ENCODE measurements at regions of chr7 and their contacts with region 1.

Region 1: DNA sequence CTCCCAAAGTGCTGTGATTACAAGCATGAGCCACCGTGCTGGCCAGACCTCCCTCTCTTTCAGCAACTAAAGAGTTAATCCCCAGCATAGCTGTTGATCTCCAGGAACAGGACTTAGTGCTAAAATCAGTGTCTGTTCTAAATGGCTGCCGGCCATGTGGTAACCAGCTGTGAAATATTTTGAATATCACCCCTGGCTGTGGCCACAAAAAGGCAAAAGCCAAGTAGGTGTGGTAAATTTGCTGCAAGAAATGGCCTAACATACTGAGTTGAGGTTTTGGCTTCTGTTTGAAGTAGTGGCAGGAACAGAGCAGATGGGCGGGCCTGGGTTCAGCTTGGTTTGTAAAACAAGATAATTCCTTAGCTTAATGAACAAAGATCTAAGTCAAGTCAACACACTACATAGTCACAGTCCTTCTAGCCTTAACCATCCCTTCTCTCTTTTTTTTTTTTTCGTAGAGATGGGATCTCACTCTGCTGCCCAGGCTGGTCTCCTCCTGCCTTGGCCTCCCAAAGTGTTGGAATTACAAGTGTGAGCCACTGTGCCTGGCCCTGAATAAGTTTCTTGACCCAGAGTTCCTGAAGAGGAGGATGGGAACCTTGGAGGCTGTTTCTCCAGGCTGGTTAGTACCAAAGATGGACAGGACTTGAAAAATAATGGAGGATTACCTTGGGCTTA is 22.7 kb upstream of the AGFG2 start:
- DNase-seq: peak in 13 of 14 experiments; percentile 23 to 90 (median 48)
- ATAC-seq: peak; percentile 91
- H3K4me3 ChIP-seq: peak overlapping the region; percentile 1
- H3K4me3 Mint-ChIP-seq: peak overlapping the region; percentile 69
- H3K27ac ChIP-seq: peak overlapping the region in 1 of 2 donors; percentile 18
- H3K27ac Mint-ChIP-seq: peak overlapping the region; percentile 76
- H3K4me1 ChIP-seq: peaks cover 29% of the 10 kb centered on the region
- H3K4me1 Mint-ChIP-seq: peaks cover 38% of the 10 kb centered on the region
- H3K27me3 ChIP-seq: no peaks in the 10 kb centered on the region
- H3K27me3 Mint-ChIP-seq: no peaks in the 10 kb centered on the region
- CTCF ChIP-seq: no peak

Region 2: DNA sequence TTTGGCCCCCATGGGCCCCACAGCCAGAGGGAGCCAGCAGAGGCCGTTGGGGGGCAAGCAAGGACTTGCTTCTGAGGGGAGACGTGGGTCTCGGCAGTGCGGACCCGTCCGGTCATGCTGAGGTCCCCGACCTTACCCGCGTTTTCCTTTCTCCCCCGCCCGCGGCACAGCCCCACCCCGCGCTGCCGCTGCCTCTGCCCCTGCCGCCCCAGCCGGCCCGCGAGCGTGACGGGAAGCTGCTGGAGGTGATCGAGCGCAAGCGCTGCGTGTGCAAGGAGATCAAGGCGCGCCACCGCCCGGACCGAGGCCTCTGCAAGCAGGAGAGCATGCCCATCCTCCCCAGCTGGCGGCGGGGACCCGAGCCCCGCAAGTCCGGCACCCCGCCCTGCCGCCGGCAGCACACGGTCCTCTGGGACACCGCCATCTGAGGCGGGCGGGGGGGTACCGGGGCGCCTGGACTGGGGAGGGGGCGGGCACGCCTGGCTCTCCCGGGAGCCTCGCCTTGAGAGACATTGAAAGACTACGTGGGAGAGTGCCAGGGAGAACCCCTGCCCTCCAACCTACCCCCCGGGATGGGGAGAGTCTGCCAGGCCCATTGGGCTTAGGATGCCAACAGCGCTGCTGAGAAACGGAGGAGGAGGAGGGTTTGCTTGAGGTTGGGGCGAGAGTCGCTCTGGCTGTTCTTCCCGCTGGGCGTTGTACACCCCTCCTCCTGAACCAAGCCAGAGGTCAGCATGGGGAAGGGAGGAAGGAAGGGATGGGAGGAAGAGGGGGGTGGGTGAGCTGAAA is 22.6 kb before region 1 on chr7:
- CTCF ChIA-PET with region 1: no interaction called
- POLR2A ChIA-PET with region 1: interaction called, 10 read pairs
- intact Hi-C with region 1: no loop called
- DNase-seq: peak; percentile 41 to 79 (median 58)
- ATAC-seq: peak; percentile 89
- H3K4me3 ChIP-seq: peak overlapping the region; percentile 35
- H3K4me3 Mint-ChIP-seq: peak overlapping the region; percentile 80
- H3K27ac ChIP-seq: no peak overlapping the region
- H3K27ac Mint-ChIP-seq: peak overlapping the region; percentile 24
- H3K4me1 ChIP-seq: peaks cover 29% of the 10 kb centered on the region
- H3K4me1 Mint-ChIP-seq: peaks cover 27% of the 10 kb centered on the region
- H3K27me3 ChIP-seq: no peaks in the 10 kb centered on the region
- H3K27me3 Mint-ChIP-seq: no peaks in the 10 kb centered on the region
- CTCF ChIP-seq: no peak

Region 3: DNA sequence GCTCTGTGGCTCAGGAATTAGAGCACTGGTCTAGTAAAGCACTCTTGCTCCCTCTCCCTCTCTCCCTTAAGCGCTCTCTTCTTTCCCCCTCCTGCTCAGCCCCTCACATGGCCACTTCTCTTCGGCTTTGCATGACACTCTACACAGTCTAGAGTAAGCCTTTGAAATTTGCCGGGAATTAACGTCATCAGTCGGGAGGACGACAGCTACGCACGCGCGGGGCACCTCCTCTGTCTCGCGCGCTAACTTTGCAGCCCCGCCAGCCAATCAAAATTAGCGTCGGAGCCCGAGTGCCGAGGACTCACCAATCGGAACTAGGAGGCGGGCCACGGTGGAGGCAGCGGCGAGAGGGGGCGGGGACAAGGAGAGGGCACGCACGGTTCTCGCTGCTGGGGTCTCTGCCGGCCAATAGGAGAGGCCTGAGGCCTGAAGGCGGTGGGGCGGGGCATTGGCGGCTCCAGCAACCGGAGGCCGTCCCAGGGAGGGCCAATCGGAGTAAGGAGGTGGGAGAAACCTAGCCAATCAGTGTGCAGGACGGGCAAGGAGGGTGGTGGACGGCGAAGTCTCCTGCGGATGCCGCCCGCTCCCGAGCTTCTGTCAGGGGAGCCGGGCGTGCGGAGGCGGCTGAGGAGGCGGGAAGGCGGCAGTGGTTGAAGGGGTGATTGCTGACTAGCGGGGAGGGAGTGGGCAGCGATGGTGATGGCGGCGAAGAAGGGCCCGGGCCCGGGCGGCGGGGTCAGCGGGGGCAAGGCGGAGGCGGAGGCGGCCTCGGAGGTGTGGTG is 22.6 kb after region 1 on chr7 and contains the start of gene AGFG2:
- CTCF ChIA-PET with region 1: no interaction called
- POLR2A ChIA-PET with region 1: interaction called, 18 read pairs
- intact Hi-C with region 1: no loop called
- DNase-seq: peak; percentile 100
- ATAC-seq: peak; percentile 94
- H3K4me3 ChIP-seq: peak within 1 kb of the TSS; percentile 73
- H3K4me3 Mint-ChIP-seq: peak within 1 kb of the TSS; percentile 99
- H3K27ac ChIP-seq: peak within 1 kb of the TSS in 1 of 2 donors; percentile 41
- H3K27ac Mint-ChIP-seq: peak within 1 kb of the TSS; percentile 77
- H3K4me1 ChIP-seq: peaks cover 44% of the 10 kb centered on the region
- H3K4me1 Mint-ChIP-seq: peaks cover 48% of the 10 kb centered on the region
- H3K27me3 ChIP-seq: no peaks in the 10 kb centered on the region
- H3K27me3 Mint-ChIP-seq: no peaks in the 10 kb centered on the region
- CTCF ChIP-seq: no peak
- total RNA-seq, gene AGFG2: 6.6 to 9.9 TPM

Measured in CD4-positive, alpha-beta T cell (primary cell).